Panc1 (cell line): ENCODE measurements at regions of chr6 and their contacts with region 1.

Region 1: GRCh38 chr6:136103763-136104311 is 146.3 kb downstream of the MTFR2 start:
- DNase-seq: no peak
- ATAC-seq: no peak
- H3K4me3 ChIP-seq: no peak overlapping the region
- H3K27ac ChIP-seq: no peak overlapping the region
- H3K4me1 ChIP-seq: no peaks in the 10 kb centered on the region
- H3K27me3 ChIP-seq: no peaks in the 10 kb centered on the region
- CTCF ChIP-seq: no peak

Region 2: GRCh38 chr6:135608031-135608430 is 495.8 kb before region 1 on chr6:
- CTCF ChIA-PET with region 1: no interaction called
- POLR2A ChIA-PET with region 1: interaction called, 17 read pairs
- in situ Hi-C with region 1: no loop called
- intact Hi-C with region 1: no loop called
- DNase-seq: no peak
- ATAC-seq: no peak
- H3K4me3 ChIP-seq: no peak overlapping the region
- H3K27ac ChIP-seq: no peak overlapping the region
- H3K4me1 ChIP-seq: no peaks in the 10 kb centered on the region
- H3K27me3 ChIP-seq: no peaks in the 10 kb centered on the region
- CTCF ChIP-seq: no peak

Region 3: GRCh38 chr6:136114661-136115060 is 10.8 kb after region 1 on chr6:
- CTCF ChIA-PET with region 1: no interaction called
- POLR2A ChIA-PET with region 1: no interaction called
- in situ Hi-C with region 1: no loop called
- intact Hi-C with region 1: no loop called
- DNase-seq: no peak
- ATAC-seq: no peak
- H3K4me3 ChIP-seq: no peak overlapping the region
- H3K27ac ChIP-seq: no peak overlapping the region
- H3K4me1 ChIP-seq: no peaks in the 10 kb centered on the region
- H3K27me3 ChIP-seq: no peaks in the 10 kb centered on the region
- CTCF ChIP-seq: no peak

Region 4: GRCh38 chr6:136127873-136128272 is 24.0 kb after region 1 on chr6:
- CTCF ChIA-PET with region 1: no interaction called
- POLR2A ChIA-PET with region 1: no interaction called
- in situ Hi-C with region 1: no loop called
- intact Hi-C with region 1: no loop called
- DNase-seq: no peak
- ATAC-seq: no peak
- H3K4me3 ChIP-seq: no peak overlapping the region
- H3K27ac ChIP-seq: no peak overlapping the region
- H3K4me1 ChIP-seq: no peaks in the 10 kb centered on the region
- H3K27me3 ChIP-seq: no peaks in the 10 kb centered on the region
- CTCF ChIP-seq: no peak

Region 5: DNA sequence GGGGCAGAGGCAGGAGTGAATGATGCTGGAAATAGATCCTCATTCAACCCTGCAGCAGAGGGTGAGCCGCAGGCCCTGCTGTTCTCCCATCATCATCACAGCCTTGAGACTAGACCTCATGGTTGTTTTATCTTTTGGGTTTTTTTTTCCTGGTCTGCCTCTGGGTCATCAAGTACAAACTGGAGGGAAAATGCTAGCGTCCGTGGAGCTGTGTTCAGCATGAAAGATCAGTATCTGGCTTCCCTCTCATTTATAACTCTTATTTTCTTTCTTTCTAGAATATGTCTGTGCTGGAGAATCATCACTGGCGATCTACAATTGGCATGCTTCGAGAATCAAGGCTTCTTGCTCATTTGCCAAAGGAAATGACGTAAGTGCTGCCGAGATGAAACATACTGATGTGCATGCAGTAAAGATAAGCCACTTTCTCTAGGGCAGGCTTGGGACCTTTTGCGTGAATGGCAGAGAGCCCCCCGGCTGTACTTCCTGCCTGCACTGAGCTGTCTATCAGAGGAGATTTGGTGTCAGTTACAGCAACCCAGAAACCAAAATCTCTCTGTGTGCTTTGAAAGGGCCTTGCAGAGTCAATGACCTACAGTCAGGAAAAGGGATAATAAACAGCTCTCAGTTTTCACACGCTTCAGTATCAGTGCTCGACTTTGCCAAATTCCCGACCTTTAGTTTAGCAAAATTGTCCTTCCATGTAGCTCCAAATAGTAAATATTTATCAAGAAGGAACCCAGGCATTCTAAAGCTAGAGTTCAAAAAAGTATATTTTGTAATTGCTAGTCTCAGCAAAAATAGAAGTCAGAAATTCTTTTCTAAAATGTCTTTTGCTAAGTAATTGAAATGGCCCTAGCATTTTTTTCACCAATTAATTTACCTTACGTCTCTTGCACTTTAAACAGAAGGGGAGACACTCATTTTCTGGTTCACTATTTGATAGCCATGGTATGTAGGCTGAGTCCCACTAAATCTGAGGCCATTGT is 70.0 kb after region 1 on chr6:
- CTCF ChIA-PET with region 1: no interaction called
- POLR2A ChIA-PET with region 1: no interaction called
- in situ Hi-C with region 1: no loop called
- intact Hi-C with region 1: no loop called
- DNase-seq: no peak
- ATAC-seq: no peak
- H3K4me3 ChIP-seq: no peak overlapping the region
- H3K27ac ChIP-seq: no peak overlapping the region
- H3K4me1 ChIP-seq: no peaks in the 10 kb centered on the region
- H3K27me3 ChIP-seq: no peaks in the 10 kb centered on the region
- CTCF ChIP-seq: no peak